CD8-positive, alpha-beta T cell (primary cell): ENCODE measurements at regions of chr11 and their contacts with region 1.

Region 1: GRCh38 chr11:61488651-61489291 is 19.8 kb upstream of the LRRC10B start:
- DNase-seq: no peak
- ATAC-seq: no peak
- H3K4me3 ChIP-seq: no peak overlapping the region
- H3K4me3 Mint-ChIP-seq: no peak overlapping the region
- H3K27ac ChIP-seq: no peak overlapping the region
- H3K27ac Mint-ChIP-seq: no peak overlapping the region
- H3K4me1 ChIP-seq: no peaks in the 10 kb centered on the region
- H3K4me1 Mint-ChIP-seq: no peaks in the 10 kb centered on the region
- H3K27me3 ChIP-seq: no peaks in the 10 kb centered on the region
- H3K27me3 Mint-ChIP-seq: no peaks in the 10 kb centered on the region
- CTCF ChIP-seq: no peak

Region 2: DNA sequence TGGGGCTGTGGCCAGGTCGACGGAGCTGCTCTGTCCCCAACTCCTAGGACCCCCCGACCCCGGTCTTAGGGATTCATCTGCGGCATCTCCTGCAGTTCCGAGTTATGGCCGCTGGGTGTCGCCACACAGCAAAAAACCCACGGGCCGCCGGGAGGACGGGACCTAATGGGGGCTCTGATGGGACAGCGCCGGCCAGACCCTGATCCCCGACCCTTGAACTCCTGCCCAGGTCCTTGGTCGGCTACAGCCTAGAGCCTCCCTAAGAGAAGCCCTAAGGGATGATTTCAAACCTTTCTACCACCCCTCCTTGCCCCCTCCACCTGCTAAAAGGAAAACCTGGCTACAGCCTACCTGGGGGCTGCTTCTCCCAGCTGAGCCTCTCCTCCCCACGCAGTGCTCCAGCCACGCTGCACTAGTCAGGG is 11.0 kb before region 1 on chr11:
- CTCF ChIA-PET with region 1: interaction called, 13 read pairs
- POLR2A ChIA-PET with region 1: no interaction called
- intact Hi-C with region 1: no loop called
- DNase-seq: peak; percentile 21 to 71 (median 59)
- ATAC-seq: peak; percentile 49
- H3K4me3 ChIP-seq: no peak overlapping the region
- H3K4me3 Mint-ChIP-seq: no peak overlapping the region
- H3K27ac ChIP-seq: no peak overlapping the region
- H3K27ac Mint-ChIP-seq: no peak overlapping the region
- H3K4me1 ChIP-seq: peaks cover 8% of the 10 kb centered on the region
- H3K4me1 Mint-ChIP-seq: peaks cover 8% of the 10 kb centered on the region
- H3K27me3 ChIP-seq: peaks cover 0 to 2% of the 10 kb centered on the region in 2 experiments
- H3K27me3 Mint-ChIP-seq: peaks cover 4% of the 10 kb centered on the region
- CTCF ChIP-seq: peak; percentile 78